ENCODE measurements at regions of chr6 and their contacts with region 1.

Region 1: DNA sequence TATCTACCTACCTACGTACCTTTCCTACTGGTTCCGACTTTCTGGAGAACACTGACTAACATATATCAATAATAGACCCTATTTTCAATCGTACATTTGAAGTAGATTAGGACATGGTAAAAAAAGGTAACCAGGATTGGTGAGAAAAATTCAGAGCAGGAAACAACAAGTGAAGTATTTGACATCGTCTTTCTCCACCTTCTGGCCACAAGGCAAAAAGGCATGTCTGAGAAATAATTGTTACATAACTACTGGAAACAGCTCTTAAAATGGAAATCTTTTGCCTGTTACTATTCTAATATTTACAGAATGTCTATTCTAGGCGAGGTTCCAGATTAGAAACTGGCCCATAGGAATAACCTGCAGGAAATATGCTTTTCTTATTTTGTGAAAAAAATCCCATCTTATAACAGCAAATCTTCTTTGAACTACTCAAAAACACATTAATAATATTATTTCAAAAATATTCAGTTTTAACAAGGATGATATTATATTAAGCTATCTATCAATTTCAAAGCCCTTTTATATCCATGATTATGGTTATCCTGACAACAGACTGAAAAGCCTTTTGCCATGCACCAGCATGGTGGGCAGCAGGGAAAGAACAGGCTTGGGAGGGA is 80.8 kb downstream of the RCAN2 start:
- DNase-seq: no peak

Region 2: DNA sequence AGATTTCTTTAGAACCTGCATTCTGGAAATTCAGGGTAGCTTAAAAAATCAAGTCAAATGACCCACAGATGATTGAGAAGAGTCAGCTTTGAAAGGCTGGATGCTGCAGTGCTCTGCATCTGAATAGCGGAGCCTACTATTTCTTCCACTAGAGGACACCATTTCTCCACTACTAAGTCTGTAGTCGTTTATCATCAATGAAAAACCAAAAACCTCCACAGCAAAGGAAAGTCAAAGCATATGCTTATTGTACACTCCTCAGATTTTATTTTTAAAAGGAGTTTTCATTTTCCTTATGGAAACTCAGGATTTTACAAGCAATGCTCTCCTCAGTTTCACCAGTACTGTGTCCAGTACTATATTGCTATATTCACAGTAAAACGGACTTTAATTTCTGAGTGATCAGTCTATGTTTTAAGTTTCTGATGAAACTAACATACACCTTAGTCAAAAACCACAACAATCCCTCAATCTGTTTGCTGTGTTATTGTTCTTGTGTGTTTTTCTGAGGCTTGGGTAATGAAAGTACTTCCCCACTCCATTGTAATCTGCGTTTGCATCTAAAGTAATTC is 189.1 kb before region 1 on chr6:
- intact Hi-C with region 1: loop called (anchors 2 kb)
- DNase-seq: no peak

Region 3: GRCh38 chr6:48315051-48315719 is 1904.7 kb after region 1 on chr6:
- intact Hi-C with region 1: no loop called
- DNase-seq: no peak

Measured in posterior cingulate gyrus (tissue), 11 donors.